HEK293 (cell line): ENCODE measurements at regions of chr18 and their contacts with region 1.

Region 1: DNA sequence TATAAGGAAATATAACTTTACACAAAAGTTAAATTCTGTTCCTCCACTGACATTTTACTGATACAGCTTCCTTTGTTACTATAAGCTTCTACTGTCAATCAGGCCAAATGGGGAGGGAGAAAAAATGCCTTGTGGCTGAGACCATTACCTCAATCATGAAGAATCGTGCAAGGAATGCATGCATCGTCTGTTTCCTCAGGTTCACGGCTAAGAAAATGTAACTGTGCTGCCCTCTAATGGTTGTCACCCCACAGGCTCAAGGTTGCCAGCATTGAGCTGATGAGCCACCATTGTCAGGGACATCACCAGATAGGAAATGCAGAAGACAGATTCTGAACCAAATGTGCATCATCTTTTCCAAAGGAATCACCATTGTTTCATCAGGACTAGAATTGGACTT is 426.9 kb downstream of the CDH2 start:
- H3K4me3 ChIP-seq: no peak overlapping the region
- H3K27ac ChIP-seq: no peak overlapping the region
- H3K4me1 ChIP-seq: no peaks in the 10 kb centered on the region
- CTCF ChIP-seq: no peak

Region 2: GRCh38 chr18:27094621-27095020 is 655.4 kb before region 1 on chr18:
- CTCF ChIA-PET with region 1: no interaction called
- POLR2A ChIA-PET with region 1: no interaction called
- H3K4me3 ChIP-seq: no peak overlapping the region
- H3K27ac ChIP-seq: no peak overlapping the region
- H3K4me1 ChIP-seq: no peaks in the 10 kb centered on the region
- CTCF ChIP-seq: no peak

Region 3: GRCh38 chr18:27276479-27277255 is 473.3 kb before region 1 on chr18:
- CTCF ChIA-PET with region 1: no interaction called
- POLR2A ChIA-PET with region 1: no interaction called
- H3K4me3 ChIP-seq: no peak overlapping the region
- H3K27ac ChIP-seq: no peak overlapping the region
- H3K4me1 ChIP-seq: no peaks in the 10 kb centered on the region
- CTCF ChIP-seq: no peak

Region 4: DNA sequence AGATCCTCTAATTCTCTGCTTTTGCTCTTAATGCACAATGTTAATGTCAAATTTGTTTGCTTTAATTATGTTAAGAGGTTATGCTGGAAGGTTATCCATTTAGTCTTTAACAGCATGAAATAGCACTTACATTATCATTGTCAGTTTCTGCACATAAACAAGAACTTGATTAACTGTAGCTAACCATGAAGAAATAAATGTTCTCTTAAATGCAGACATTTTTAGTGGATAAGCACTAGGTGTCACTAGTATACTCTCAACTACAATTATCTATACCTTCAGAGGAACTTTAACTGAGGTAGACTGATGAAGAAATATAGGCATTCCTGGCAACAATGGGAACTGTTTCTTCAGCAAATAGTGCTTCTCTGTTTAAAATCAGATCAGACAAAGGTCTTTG is 386.1 kb before region 1 on chr18:
- CTCF ChIA-PET with region 1: interaction called, 12 read pairs
- POLR2A ChIA-PET with region 1: no interaction called
- H3K4me3 ChIP-seq: no peak overlapping the region
- H3K27ac ChIP-seq: no peak overlapping the region
- H3K4me1 ChIP-seq: no peaks in the 10 kb centered on the region
- CTCF ChIP-seq: no peak

Region 5: GRCh38 chr18:27599202-27599829 is 150.7 kb before region 1 on chr18:
- CTCF ChIA-PET with region 1: interaction called, 89 read pairs
- POLR2A ChIA-PET with region 1: no interaction called
- H3K4me3 ChIP-seq: no peak overlapping the region
- H3K27ac ChIP-seq: no peak overlapping the region
- H3K4me1 ChIP-seq: no peaks in the 10 kb centered on the region
- CTCF ChIP-seq: peak; percentile 40; the same call in 1 of the 2 replicates

Region 6: GRCh38 chr18:27605107-27605834 is 144.7 kb before region 1 on chr18:
- CTCF ChIA-PET with region 1: interaction called, 89 read pairs
- POLR2A ChIA-PET with region 1: interaction called, 8 read pairs
- H3K4me3 ChIP-seq: no peak overlapping the region
- H3K27ac ChIP-seq: no peak overlapping the region
- H3K4me1 ChIP-seq: no peaks in the 10 kb centered on the region
- CTCF ChIP-seq: peak; percentile 58; the same call in 1 of the 2 replicates

Region 7: GRCh38 chr18:27685807-27686412 is 64.1 kb before region 1 on chr18:
- CTCF ChIA-PET with region 1: interaction called, 41 read pairs
- POLR2A ChIA-PET with region 1: no interaction called
- H3K4me3 ChIP-seq: no peak overlapping the region
- H3K27ac ChIP-seq: no peak overlapping the region
- H3K4me1 ChIP-seq: no peaks in the 10 kb centered on the region
- CTCF ChIP-seq: no peak

Region 8: DNA sequence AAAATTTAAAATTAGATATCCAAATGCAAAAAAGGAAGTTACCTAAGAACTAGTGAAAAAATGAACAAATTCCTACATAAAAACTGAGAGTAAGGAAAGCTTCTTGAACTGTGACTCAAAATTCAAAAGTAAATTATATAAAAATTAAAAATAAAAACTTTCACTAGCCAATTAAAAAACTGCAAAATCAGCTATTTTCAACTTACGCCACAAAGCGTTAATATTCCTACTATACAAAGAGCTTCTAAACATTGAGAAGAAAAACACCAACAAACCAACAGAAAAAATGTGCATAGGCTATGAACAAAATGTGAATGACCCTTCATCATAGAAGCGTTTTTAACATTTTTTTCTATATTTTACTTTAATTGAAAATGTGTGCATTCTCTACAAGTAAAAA is 18.8 kb before region 1 on chr18:
- CTCF ChIA-PET with region 1: interaction called, 20 read pairs
- POLR2A ChIA-PET with region 1: interaction called, 4 read pairs
- H3K4me3 ChIP-seq: no peak overlapping the region
- H3K27ac ChIP-seq: no peak overlapping the region
- H3K4me1 ChIP-seq: no peaks in the 10 kb centered on the region
- CTCF ChIP-seq: no peak

Region 9: DNA sequence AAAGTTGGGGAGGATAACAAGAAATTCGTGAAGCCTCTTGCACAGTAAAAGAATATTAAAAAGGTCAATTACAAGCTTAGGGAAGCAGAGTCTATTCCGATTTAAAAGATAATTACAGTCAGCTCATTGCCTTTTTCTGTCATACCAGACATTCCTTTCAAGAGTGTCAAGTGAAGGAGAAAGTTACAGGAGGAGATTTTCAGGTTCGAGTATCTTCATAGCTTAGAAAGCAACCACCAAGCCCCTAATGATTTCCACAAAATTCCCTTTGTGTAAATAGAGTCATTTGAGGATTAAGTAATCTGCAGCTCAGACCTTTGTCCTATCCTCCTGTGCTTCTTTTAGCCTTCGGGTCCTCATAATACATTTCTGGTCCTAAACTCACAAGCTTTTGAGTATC is 12.0 kb after region 1 on chr18:
- CTCF ChIA-PET with region 1: interaction called, 30 read pairs
- POLR2A ChIA-PET with region 1: no interaction called
- H3K4me3 ChIP-seq: no peak overlapping the region
- H3K27ac ChIP-seq: no peak overlapping the region
- H3K4me1 ChIP-seq: no peaks in the 10 kb centered on the region
- CTCF ChIP-seq: no peak

Region 10: GRCh38 chr18:27871726-27872125 is 121.7 kb after region 1 on chr18:
- CTCF ChIA-PET with region 1: no interaction called
- POLR2A ChIA-PET with region 1: no interaction called
- H3K4me3 ChIP-seq: no peak overlapping the region
- H3K27ac ChIP-seq: no peak overlapping the region
- H3K4me1 ChIP-seq: no peaks in the 10 kb centered on the region
- CTCF ChIP-seq: no peak